ENCODE measurements at regions of chr10 and their contacts with region 1.

Region 1: DNA sequence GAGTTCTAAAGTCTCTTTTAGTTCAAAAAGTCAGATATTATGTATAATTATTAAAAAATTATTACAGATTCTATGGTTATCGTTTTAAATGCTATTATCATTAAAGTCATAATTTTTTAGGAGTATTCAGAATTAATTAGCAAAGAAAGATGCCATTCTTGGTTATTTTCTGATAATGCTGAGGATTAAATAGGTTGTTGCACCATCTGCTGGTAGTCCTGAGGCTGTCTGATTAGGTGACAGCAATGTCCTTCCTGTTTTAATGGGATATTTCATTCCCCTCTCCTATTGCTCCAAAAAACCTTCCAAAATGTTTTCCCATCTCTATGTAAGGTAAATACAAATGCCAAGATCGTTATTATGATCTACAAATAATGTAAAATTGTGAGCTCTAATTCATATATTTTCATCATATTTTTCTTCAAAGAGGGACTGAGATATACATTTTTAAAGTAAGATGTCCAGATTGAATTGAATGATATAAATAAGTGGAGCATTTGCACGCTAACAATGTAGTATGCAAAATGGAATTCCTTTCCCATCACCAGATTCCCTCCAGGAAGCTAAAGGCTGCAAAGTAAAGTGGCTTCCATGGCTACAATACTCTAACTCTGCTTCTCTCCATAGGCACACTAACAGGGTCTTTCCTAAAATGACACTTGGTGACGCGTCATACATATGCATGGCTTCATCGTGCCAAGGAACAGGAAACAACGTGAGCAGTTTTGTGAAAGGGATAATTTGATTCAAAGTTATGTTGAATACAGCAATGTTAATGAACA is 58.8 kb upstream of the AKR1E2 start:
- DNase-seq: peak; percentile 52
- ATAC-seq: no peak
- H3K4me3 ChIP-seq: no peak overlapping the region
- H3K27ac ChIP-seq: peak overlapping the region; percentile 99
- H3K4me1 ChIP-seq: peaks cover 81% of the 10 kb centered on the region
- H3K27me3 ChIP-seq: no peaks in the 10 kb centered on the region
- CTCF ChIP-seq: peak; percentile 69

Region 2: GRCh38 chr10:3785257-3785850 is 981.9 kb before region 1 on chr10:
- CTCF ChIA-PET with region 1: no interaction called
- POLR2A ChIA-PET with region 1: interaction called, 13 read pairs
- intact Hi-C with region 1: loop called (anchors 2 kb)
- DNase-seq: peak; percentile 91
- ATAC-seq: peak; percentile 48
- H3K4me3 ChIP-seq: peak overlapping the region; percentile 96
- H3K27ac ChIP-seq: peak overlapping the region; percentile 93
- H3K4me1 ChIP-seq: peaks cover 23% of the 10 kb centered on the region
- H3K27me3 ChIP-seq: no peaks in the 10 kb centered on the region
- CTCF ChIP-seq: no peak

Region 3: DNA sequence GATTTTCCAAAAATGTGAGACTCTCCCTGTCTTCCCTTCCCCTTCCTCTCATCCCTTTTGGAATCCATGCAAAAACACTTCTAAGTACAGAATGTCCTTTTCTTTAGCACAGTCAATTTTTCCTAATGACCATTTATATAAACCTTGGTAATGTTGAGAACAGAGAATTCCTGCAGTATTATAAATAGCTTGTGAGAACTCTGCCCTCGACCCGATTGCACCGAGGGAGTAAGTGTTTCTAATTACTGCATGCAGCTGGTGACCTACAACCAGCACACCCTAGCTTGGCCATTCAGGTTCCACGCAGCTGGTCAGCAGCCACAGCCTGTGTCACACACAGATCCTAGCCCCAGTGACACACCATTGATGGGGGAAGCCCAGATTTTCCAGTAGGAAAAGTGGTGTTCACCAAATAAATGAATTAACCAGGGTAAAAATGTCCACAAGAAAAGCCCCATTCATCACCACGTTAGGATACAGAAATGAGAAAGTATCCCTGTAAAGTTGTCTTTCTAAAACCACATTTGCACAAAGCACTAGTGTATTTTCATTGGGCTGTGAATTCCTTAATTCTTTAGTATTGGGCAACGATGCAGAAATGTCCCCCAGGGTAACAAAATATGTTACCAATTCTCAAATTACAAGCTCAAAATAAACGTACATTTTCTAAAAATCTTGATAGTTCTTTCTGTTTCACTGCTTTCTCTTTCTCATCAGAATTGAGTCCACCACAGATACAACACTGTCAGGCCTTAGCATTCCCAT is 483.2 kb before region 1 on chr10:
- CTCF ChIA-PET with region 1: no interaction called
- POLR2A ChIA-PET with region 1: no interaction called
- intact Hi-C with region 1: loop called (anchors 2 kb)
- DNase-seq: no peak
- ATAC-seq: no peak
- H3K4me3 ChIP-seq: no peak overlapping the region
- H3K27ac ChIP-seq: no peak overlapping the region
- H3K4me1 ChIP-seq: peaks cover 29% of the 10 kb centered on the region
- H3K27me3 ChIP-seq: no peaks in the 10 kb centered on the region
- CTCF ChIP-seq: no peak

Region 4: DNA sequence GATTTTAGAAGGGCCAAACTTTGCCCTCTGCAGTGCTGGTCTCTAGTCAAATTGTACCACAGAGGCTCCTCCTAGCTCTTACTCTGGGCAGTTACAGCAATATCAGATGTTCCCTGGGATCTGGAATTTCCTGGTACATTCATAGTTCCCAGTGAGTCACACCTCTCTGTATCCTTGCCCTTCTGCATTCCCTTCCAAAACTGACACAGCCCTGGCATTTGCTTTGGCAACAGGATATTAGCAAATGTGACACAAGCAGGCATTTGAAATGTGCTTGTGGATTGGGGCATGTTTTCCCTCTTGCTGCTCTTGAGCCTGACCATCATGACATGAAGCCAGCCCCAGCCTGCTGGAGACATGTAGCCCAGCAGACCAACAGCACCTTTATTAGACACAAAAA is 225.9 kb before region 1 on chr10:
- CTCF ChIA-PET with region 1: interaction called, 4 read pairs
- POLR2A ChIA-PET with region 1: no interaction called
- intact Hi-C with region 1: loop called (anchors 10 kb)
- DNase-seq: peak; percentile 88
- ATAC-seq: peak; percentile 100
- H3K4me3 ChIP-seq: no peak overlapping the region
- H3K27ac ChIP-seq: peak overlapping the region; percentile 97
- H3K4me1 ChIP-seq: peaks cover 17% of the 10 kb centered on the region
- H3K27me3 ChIP-seq: no peaks in the 10 kb centered on the region
- CTCF ChIP-seq: peak; percentile 37; the same call in 1 of the 2 replicates

Region 5: DNA sequence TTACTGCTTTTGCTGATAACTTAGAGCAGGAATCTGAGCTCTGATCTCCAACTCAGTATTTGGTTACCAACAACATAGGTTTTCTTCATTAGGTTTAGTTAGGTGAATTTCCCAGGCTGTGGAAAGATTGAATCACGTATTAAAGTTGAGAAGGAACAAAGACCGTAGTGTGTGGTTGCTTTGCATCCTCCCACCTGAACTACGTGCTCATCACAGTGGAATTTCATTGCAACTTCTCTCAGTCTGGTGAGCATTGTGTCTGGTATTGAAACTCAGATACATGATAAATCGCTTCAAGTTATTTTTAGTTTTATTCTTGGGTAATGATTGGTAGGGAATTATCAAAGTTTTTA is 80.6 kb before region 1 on chr10:
- CTCF ChIA-PET with region 1: interaction called, 4 read pairs
- POLR2A ChIA-PET with region 1: interaction called, 16 read pairs
- intact Hi-C with region 1: no loop called
- DNase-seq: peak; percentile 93
- ATAC-seq: peak; percentile 83
- H3K4me3 ChIP-seq: no peak overlapping the region
- H3K27ac ChIP-seq: peak overlapping the region; percentile 100
- H3K4me1 ChIP-seq: peaks cover 63% of the 10 kb centered on the region
- H3K27me3 ChIP-seq: no peaks in the 10 kb centered on the region
- CTCF ChIP-seq: no peak

Region 6: GRCh38 chr10:4813023-4813422 is 45.8 kb after region 1 on chr10:
- CTCF ChIA-PET with region 1: interaction called, 3 read pairs
- POLR2A ChIA-PET with region 1: interaction called, 3 read pairs
- intact Hi-C with region 1: loop called (anchors 1 kb)
- DNase-seq: peak; percentile 66
- ATAC-seq: peak; percentile 80
- H3K4me3 ChIP-seq: no peak overlapping the region
- H3K27ac ChIP-seq: peak overlapping the region; percentile 67
- H3K4me1 ChIP-seq: peaks cover 16% of the 10 kb centered on the region
- H3K27me3 ChIP-seq: no peaks in the 10 kb centered on the region
- CTCF ChIP-seq: no peak

Region 7: DNA sequence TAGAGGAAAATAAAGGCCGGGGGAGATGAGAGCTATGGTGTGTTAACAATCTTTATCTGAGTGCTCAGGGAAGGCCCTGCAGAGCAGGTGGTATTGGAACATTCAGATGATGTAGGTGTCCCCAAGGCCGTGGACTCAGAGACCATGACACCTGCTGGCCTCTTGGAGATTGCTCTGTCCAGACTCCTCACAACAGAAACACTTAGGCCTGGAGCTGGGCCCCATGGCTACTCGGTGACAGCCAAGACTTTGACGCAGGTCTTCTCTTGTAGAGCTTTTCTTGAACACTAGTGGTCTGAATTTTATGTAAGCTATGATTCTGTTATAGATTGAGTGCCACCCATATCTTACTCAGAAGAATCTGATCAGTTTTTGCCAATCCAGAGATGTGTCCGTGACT is 72.2 kb after region 1 on chr10:
- CTCF ChIA-PET with region 1: no interaction called
- POLR2A ChIA-PET with region 1: no interaction called
- intact Hi-C with region 1: no loop called
- DNase-seq: no peak
- ATAC-seq: 0 out of 2 replicates have a peak, but pooled peaks have one; percentile 33
- H3K4me3 ChIP-seq: no peak overlapping the region
- H3K27ac ChIP-seq: no peak overlapping the region
- H3K4me1 ChIP-seq: no peaks in the 10 kb centered on the region
- H3K27me3 ChIP-seq: no peaks in the 10 kb centered on the region
- CTCF ChIP-seq: no peak